ENCODE measurements at regions of chr4 and their contacts with region 1.

Region 1: GRCh38 chr4:107037199-107037584 is 1.1 kb upstream of the DKK2 start:
- DNase-seq: peak; percentile 67
- H3K4me3 ChIP-seq: peak overlapping the region; percentile 69 to 83
- H3K27ac ChIP-seq: peak overlapping the region in 1 of 2 experiments; percentile 81; a peak in 1 of 4 replicates
- H3K4me1 ChIP-seq: peaks cover 0 to 15% of the 10 kb centered on the region in 2 experiments; a peak in 2 of 4 replicates
- H3K27me3 ChIP-seq: no peaks in the 10 kb centered on the region
- CTCF ChIP-seq: peak; percentile 81
- EP300 ChIP-seq: no peak
- RAD21 ChIP-seq: peak; percentile 86

Region 2: GRCh38 chr4:107011312-107011711 is 25.9 kb before region 1 on chr4:
- CTCF ChIA-PET with region 1: interaction called, 22 read pairs
- POLR2A ChIA-PET with region 1: no interaction called
- DNase-seq: no peak
- H3K4me3 ChIP-seq: no peak overlapping the region
- H3K27ac ChIP-seq: no peak overlapping the region
- H3K4me1 ChIP-seq: no peaks in the 10 kb centered on the region; a peak in 1 of 4 replicates
- H3K27me3 ChIP-seq: no peaks in the 10 kb centered on the region
- CTCF ChIP-seq: no peak
- EP300 ChIP-seq: no peak
- RAD21 ChIP-seq: no peak

Region 3: DNA sequence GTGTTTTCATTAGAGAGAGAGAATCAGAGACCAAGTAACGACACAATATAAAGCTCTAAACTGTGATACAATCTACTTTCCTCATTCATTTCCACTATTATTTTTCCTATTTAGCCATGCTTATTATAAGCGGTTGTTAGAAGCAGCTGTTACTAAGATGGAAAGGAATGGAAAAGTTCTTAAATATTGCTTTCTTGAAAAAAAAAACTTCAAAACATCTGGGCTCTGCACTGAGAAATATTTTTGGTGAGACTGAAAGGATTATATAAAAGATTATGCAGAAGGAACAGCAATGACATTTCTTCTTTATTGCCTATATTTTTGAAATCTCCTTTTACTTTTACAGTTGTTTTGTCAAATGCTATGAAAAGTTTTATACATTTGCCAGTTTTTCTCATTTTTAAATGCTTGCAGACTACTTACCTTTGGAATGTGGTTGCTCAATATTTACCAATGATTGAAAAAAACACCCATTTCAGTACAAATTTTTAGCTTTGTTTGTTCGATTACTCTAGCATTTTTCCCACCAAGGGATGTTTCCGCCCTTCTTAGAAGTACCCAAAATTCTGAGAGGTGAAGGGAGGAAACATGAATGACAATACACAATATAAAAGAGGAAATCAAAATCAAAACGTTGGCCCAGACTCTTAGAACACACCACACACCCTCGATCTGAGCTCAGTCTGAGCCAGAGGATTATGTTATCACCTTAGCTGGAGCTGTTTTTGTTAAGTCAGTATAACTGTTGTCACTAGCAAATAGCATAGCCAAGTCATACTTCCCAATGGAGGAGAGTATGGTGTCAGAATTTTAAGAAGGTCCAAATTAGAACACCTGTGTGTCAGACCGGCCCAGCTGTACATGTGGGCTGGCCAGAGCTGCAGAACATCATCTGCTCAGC is 19.5 kb before region 1 on chr4:
- CTCF ChIA-PET with region 1: interaction called, 22 read pairs
- POLR2A ChIA-PET with region 1: no interaction called
- DNase-seq: no peak
- H3K4me3 ChIP-seq: no peak overlapping the region
- H3K27ac ChIP-seq: no peak overlapping the region
- H3K4me1 ChIP-seq: no peaks in the 10 kb centered on the region; a peak in 1 of 4 replicates
- H3K27me3 ChIP-seq: no peaks in the 10 kb centered on the region
- CTCF ChIP-seq: no peak
- EP300 ChIP-seq: no peak
- RAD21 ChIP-seq: no peak

Region 4: DNA sequence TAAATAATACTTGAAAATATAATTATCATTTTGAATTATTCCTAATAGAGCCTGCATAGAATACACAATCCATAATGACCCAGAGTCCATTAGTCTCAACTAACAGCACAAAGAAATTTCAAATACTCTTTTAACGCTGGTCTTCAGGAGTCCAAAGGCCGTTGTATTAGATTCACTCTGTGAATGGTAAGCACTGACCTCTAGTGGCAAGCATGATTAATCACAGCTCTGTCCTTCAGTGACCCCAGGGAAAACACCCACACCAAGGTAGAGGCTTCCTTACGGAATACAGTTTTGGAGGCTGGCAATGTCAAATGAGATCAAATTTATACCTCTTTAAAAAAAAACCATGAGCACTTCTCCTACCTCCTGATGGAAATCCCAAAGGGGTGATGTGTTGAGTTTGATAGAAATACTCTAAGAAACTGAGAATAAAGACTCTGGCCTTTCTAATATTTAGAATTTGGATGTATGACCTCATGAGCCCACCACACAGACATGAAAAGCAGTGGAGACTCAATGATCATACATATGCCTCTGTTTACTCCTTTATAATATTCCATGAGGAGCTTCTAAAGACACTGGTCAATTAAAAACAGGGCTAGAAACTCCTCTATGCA is 146.1 kb after region 1 on chr4:
- CTCF ChIA-PET with region 1: interaction called, 69 read pairs
- POLR2A ChIA-PET with region 1: no interaction called
- DNase-seq: peak; percentile 44
- H3K4me3 ChIP-seq: no peak overlapping the region; a peak in 1 of 4 replicates
- H3K27ac ChIP-seq: no peak overlapping the region; a peak in 1 of 4 replicates
- H3K4me1 ChIP-seq: peaks cover 0 to 5% of the 10 kb centered on the region in 2 experiments; a peak in 2 of 4 replicates
- H3K27me3 ChIP-seq: no peaks in the 10 kb centered on the region
- CTCF ChIP-seq: peak; percentile 89
- EP300 ChIP-seq: peak in 1 of 2 experiments; percentile 28; a peak in 2 of 4 replicates
- RAD21 ChIP-seq: peak; percentile 92

Region 5: DNA sequence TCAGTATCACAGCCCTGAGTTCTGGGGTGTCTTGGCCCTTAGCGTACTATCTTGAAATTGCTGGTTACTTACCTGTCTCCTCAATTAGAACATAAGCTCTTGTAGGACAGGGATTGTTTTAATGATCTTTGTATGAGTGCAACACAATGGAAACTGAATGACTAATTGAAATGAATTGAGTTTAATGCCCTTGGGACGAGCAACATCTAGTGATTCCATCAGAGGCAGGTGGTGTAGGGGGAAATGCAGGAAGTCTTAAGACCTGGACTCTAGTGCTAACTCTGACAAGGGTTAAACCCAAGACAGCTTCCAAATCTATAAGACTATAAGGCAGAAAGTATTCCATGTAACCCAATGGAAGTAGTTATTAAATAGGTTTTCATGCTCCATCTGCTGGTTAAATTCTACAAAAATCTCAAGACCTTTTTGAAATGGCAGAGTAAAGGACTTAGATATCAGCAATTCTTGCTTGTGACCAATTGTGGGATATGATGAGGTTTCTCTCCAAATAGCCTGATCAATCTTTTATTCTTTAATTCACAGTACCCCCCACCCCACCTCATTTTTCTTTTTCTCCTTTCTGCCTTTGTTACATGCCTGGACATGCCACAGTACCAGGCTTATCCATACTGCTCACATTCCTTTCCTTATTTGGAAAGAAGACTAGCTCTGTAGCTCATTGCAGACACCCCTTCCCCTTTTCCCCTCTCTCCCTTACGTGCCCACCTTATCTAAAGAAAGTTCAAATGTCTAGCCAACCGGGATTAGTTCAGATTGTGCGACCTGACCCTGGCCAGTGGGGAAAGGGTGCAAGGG is 342.1 kb after region 1 on chr4:
- CTCF ChIA-PET with region 1: interaction called, 12 read pairs
- POLR2A ChIA-PET with region 1: no interaction called
- DNase-seq: no peak
- H3K4me3 ChIP-seq: no peak overlapping the region
- H3K27ac ChIP-seq: peak overlapping the region in 1 of 2 experiments; percentile 50; a peak in 2 of 4 replicates
- H3K4me1 ChIP-seq: peaks cover 2 to 17% of the 10 kb centered on the region in 2 experiments; a peak in 3 of 4 replicates
- H3K27me3 ChIP-seq: no peaks in the 10 kb centered on the region
- CTCF ChIP-seq: peak; percentile 61
- EP300 ChIP-seq: no peak
- RAD21 ChIP-seq: peak; percentile 62

Region 6: GRCh38 chr4:107519053-107519452 is 481.9 kb after region 1 on chr4:
- CTCF ChIA-PET with region 1: interaction called, 109 read pairs
- POLR2A ChIA-PET with region 1: no interaction called
- DNase-seq: peak; percentile 25
- H3K4me3 ChIP-seq: no peak overlapping the region
- H3K27ac ChIP-seq: no peak overlapping the region; a peak in 1 of 4 replicates
- H3K4me1 ChIP-seq: peaks cover 0 to 8% of the 10 kb centered on the region in 2 experiments; a peak in 2 of 4 replicates
- H3K27me3 ChIP-seq: no peaks in the 10 kb centered on the region
- CTCF ChIP-seq: peak; percentile 78
- EP300 ChIP-seq: no peak
- RAD21 ChIP-seq: peak; percentile 97

Region 7: DNA sequence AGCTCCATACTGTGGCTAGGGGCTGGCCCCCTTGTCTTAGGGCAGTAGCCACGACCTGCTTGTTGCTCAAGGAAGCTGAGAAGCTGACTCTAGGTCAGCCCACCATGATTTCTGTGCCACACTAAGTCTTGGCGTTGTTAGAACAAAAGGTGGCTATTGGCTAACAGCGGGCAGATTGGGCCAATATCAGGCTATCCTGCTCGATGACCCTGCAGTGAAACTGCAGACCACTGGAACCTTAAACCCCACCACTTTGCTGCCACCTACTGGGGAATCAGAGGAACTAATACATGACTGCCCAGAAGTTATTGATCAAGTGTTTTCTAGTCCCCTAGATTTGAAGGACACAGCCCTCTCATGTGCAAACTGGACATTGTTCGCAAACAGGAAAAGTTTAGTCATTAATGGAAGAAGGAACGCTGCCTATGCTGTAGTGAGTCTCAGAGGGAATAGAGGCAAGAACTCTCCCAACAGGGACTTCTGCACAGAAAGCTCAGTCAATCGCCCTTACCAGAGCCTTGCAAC is 699.8 kb after region 1 on chr4:
- CTCF ChIA-PET with region 1: interaction called, 15 read pairs
- POLR2A ChIA-PET with region 1: no interaction called
- DNase-seq: peak; percentile 45
- H3K4me3 ChIP-seq: no peak overlapping the region; a peak in 1 of 4 replicates
- H3K27ac ChIP-seq: no peak overlapping the region
- H3K4me1 ChIP-seq: peaks cover 11 to 38% of the 10 kb centered on the region in 2 experiments; a peak in 3 of 4 replicates
- H3K27me3 ChIP-seq: no peaks in the 10 kb centered on the region
- CTCF ChIP-seq: peak; percentile 81
- EP300 ChIP-seq: no peak
- RAD21 ChIP-seq: peak; percentile 81